ENCODE measurements at regions of chr5 and their contacts with region 1.

Region 1: DNA sequence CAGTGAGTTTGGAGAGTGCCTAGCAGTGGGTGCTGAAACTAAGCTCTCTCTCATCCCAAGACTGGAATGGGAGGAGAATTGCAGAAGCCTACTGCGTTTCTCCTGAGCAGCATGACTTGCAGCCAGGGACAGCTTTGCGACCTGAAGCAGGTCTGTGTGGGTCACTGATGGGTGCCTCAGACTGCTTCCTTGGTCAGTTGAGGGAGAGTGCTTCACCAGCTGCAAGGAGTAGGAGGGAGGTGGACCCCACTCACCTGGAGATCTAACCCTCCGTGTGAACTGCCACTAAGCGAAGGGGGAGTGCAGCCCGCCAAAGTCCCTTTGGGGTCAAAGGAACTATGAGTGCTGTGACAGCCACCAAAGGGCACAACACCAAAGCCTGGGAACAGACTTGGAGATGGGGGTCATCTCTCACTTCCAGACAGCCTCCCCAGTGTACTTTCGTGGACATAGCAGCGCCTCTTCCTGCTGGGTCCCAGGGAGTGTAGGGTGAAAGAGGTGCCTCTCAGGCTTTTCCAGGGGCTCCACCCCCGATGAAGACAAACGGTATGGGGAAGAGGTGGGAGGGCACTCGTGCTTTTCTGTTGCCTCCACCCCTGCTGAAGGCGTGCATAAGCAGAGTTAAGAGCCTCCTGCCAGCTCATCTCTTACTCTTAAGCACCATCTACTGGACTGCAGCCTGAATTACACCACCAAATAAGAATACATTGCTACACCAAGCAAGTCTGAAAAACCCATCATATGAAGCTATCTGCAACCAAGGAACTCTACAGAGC is 34.3 kb upstream of the MACIR start:
- DNase-seq: no peak
- H3K4me3 ChIP-seq: no peak overlapping the region
- H3K27ac ChIP-seq: no peak overlapping the region
- H3K27me3 ChIP-seq: no peaks in the 10 kb centered on the region
- CTCF ChIP-seq: peak; percentile 69

Region 2: DNA sequence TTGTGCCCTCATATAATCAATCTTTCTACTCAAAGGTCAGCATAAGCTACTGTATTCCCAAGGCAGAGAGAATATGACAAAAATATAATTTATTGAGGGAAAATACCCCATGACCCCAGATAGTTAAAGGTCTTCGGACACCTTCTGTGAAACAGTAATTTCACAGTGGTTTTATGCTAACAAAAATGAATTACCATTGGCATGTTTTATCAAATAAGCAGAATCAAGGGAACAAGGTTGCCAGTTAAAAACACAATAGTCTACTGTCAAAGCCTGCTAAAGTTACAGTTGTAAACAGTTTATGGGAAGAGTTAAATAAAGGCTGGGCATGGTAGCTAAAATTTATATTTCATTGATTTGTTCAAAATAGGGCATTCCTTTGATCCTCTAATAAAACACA is 258.7 kb before region 1 on chr5:
- CTCF ChIA-PET with region 1: no interaction called
- POLR2A ChIA-PET with region 1: no interaction called
- DNase-seq: no peak
- H3K4me3 ChIP-seq: no peak overlapping the region
- H3K27ac ChIP-seq: no peak overlapping the region
- H3K27me3 ChIP-seq: no peaks in the 10 kb centered on the region
- CTCF ChIP-seq: no peak

Region 3: DNA sequence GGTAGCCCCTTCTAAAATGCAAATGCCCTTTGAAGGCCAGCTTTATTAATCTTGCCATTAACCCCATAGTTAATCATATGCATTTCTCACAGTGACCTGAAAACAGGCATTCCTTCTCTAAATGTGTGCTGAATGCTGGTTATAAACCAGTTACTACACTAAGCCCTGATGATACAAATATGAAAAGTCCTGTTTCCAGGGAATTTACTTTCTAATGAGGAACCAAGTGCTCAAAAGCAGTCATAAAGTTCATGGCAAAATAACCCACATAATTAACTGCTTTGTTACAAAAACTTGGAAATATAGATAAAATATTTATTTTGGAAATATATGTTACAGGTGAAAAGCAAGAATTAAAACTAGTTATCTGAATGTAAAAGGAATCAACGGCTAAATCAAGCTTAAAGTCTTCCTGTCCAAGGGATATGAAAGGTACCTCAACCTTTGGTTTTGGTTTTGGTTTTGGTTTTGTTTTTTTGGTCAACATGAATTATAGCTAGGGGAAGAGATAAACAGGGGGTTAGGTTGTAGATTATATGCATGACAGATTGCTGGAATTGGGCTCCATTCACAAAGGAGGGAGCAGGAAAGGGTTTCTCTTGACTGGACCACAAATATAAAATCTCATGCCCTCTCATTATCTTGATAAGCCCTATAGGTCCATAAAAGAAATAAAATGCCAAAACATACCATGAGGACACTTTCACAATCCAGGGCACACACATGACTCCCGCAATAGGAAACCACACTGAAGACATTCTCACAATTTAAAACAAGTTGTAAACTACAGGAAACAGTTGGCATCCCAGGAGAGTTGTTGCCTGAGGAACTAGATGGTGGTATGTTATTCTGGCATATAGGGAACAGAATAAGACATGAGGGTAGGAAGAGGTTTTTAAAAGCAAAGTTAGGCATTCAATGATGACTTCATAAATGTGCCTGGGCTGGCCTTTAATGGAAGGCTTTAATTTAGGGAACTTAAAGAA is 12.4 kb before region 1 on chr5:
- CTCF ChIA-PET with region 1: interaction called, 22 read pairs
- POLR2A ChIA-PET with region 1: no interaction called
- DNase-seq: no peak
- H3K4me3 ChIP-seq: no peak overlapping the region
- H3K27ac ChIP-seq: no peak overlapping the region
- H3K27me3 ChIP-seq: no peaks in the 10 kb centered on the region
- CTCF ChIP-seq: no peak

Region 4: GRCh38 chr5:103271570-103272289 is 47.4 kb after region 1 on chr5:
- CTCF ChIA-PET with region 1: interaction called, 12 read pairs
- POLR2A ChIA-PET with region 1: no interaction called
- DNase-seq: no peak
- H3K4me3 ChIP-seq: no peak overlapping the region
- H3K27ac ChIP-seq: no peak overlapping the region
- H3K27me3 ChIP-seq: no peaks in the 10 kb centered on the region
- CTCF ChIP-seq: no peak

Region 5: DNA sequence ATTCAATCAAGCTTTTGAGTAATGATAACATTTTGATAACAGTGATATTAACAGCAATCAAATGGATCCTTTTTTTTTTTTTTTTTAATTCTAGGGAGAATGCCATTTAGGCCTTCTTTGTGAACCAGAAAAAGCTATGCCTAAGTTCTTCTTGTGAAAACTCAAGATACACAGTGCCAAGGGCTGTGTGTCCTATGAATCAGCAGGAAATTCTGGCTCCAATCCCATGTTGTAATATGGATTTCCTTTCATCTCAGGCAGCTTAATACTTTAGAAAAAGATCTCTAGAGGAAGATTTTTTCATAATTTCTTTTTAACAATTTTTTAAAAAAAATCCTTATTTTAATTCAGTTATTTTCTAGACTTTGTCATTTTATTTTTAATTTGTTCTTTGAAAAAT is 242.2 kb after region 1 on chr5:
- CTCF ChIA-PET with region 1: interaction called, 16 read pairs
- POLR2A ChIA-PET with region 1: no interaction called
- DNase-seq: no peak
- H3K4me3 ChIP-seq: no peak overlapping the region
- H3K27ac ChIP-seq: no peak overlapping the region
- H3K27me3 ChIP-seq: no peaks in the 10 kb centered on the region
- CTCF ChIP-seq: no peak